OCI-LY7 (cell line): ENCODE measurements at regions of chr20 and their contacts with region 1.

Region 1: GRCh38 chr20:47438577-47439381 is 62.9 kb upstream of the NCOA3 start:
- DNase-seq: peak; percentile 85
- H3K4me3 ChIP-seq: peak overlapping the region; percentile 60
- H3K27ac ChIP-seq: peak overlapping the region; percentile 84
- H3K4me1 ChIP-seq: peaks cover 69% of the 10 kb centered on the region
- CTCF ChIP-seq: no peak

Region 2: DNA sequence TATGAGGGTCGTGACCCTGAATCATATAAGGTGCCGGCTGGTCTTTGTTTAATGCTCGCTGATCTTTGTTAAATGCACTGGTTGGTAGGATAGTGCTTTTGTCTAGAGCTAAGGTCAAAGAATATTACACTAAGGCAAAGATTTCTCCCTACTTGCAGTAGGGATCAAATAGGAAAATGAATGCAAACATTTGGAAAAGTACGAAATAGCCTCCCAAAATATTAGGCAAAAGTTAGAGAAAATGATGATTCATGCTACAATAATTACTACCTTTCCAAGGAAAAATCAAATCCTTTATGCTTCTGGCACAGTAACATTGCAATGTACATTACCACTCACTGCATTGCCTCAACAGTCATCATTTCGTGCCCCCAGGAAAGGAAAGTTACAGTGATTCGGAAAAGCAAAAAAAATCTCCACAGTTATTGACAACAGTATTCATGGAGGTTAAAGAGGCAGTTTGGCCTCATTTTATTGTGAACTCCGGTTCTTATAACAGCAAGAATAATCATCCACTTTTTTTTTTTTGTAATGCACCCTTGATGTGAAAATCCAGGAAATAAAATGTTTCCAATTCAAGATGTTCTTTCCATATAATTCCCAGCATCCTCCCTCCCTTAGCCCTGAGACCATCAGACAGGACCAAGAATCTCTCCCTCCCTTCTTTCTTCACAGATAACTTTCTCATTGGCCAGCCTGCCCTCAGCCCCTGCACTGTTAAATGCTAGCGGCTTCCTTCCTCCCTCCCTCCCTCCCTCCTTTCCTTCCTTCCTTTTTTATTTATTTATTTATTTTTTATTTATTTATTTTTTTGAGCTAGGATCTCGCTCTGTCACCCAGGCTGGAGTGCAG is 20.5 kb before region 1 on chr20:
- CTCF ChIA-PET with region 1: interaction called, 6 read pairs
- POLR2A ChIA-PET with region 1: interaction called, 143 read pairs
- intact Hi-C with region 1: loop called (anchors 2 kb)
- DNase-seq: no peak
- H3K4me3 ChIP-seq: no peak overlapping the region
- H3K27ac ChIP-seq: peak overlapping the region; percentile 99
- H3K4me1 ChIP-seq: peaks cover 80% of the 10 kb centered on the region
- CTCF ChIP-seq: no peak

Region 3: DNA sequence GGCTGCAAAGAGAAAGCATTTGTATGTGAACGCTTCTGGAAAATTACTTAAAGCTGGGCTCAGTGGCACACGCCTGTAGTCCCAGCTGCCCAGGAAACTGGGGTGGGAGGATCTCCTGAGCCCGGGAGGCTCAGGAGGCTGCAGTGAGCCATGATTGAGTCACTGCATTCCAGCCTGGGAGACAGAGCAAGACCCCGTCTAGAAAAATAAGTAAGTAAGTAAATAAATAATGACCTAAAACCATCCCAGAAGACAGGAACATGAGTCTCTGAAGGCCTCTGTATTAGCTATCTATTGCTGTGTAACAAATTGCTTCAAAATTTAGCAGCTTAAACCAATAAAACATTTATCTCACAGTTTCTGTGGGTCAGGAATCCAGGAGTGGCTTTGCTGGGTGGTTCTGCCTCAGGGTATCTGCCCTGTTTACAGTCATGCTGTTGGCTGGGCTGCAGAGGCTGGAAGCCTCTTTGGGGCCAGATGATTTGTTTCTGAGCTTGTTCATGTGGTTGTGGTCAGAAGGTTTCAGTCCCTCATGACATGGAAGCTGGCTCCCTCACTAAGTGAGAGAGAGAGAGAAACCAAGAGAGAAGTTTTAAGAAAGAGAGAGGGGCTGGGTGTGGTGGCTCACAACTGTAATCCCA is 14.5 kb after region 1 on chr20:
- CTCF ChIA-PET with region 1: interaction called, 5 read pairs
- POLR2A ChIA-PET with region 1: interaction called, 60 read pairs
- intact Hi-C with region 1: no loop called
- DNase-seq: peak; percentile 70
- H3K4me3 ChIP-seq: no peak overlapping the region
- H3K27ac ChIP-seq: peak overlapping the region; percentile 46
- H3K4me1 ChIP-seq: peaks cover 66% of the 10 kb centered on the region
- CTCF ChIP-seq: no peak